Calu3 (cell line): ENCODE measurements at regions of chrX and their contacts with region 1.

Region 1: GRCh38 chrX:54891573-54891972 is 29.1 kb upstream of the TRO start:
- DNase-seq: peak; percentile 21
- H3K4me3 Mint-ChIP-seq: no peak overlapping the region
- H3K27ac Mint-ChIP-seq: no peak overlapping the region
- H3K4me1 Mint-ChIP-seq: no peaks in the 10 kb centered on the region
- H3K27me3 Mint-ChIP-seq: peaks cover 11% of the 10 kb centered on the region
- CTCF ChIP-seq: no peak

Region 2: DNA sequence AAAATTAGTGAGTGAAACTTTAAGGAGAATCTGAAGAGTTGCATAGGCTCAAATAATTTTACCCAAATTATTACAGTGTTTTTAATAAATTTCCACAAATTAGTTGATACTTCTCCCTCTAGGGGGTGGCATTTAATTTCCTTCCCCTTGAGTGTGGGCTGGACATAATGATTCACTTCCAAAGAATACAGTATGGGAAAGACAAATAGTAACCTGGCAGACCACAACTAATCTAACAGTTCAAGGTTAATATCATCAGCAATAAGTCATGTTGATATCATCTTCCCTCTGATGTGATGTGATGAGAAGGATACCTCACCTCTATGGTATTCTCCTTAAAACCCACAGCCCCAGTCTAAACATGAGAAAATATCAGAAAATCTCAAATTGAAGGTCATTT is 86.9 kb after region 1 on chrX:
- CTCF ChIA-PET with region 1: no interaction called
- intact Hi-C with region 1: no loop called
- DNase-seq: no peak
- H3K4me3 Mint-ChIP-seq: no peak overlapping the region
- H3K27ac Mint-ChIP-seq: no peak overlapping the region
- H3K4me1 Mint-ChIP-seq: no peaks in the 10 kb centered on the region
- H3K27me3 Mint-ChIP-seq: no peaks in the 10 kb centered on the region
- CTCF ChIP-seq: no peak

Region 3: DNA sequence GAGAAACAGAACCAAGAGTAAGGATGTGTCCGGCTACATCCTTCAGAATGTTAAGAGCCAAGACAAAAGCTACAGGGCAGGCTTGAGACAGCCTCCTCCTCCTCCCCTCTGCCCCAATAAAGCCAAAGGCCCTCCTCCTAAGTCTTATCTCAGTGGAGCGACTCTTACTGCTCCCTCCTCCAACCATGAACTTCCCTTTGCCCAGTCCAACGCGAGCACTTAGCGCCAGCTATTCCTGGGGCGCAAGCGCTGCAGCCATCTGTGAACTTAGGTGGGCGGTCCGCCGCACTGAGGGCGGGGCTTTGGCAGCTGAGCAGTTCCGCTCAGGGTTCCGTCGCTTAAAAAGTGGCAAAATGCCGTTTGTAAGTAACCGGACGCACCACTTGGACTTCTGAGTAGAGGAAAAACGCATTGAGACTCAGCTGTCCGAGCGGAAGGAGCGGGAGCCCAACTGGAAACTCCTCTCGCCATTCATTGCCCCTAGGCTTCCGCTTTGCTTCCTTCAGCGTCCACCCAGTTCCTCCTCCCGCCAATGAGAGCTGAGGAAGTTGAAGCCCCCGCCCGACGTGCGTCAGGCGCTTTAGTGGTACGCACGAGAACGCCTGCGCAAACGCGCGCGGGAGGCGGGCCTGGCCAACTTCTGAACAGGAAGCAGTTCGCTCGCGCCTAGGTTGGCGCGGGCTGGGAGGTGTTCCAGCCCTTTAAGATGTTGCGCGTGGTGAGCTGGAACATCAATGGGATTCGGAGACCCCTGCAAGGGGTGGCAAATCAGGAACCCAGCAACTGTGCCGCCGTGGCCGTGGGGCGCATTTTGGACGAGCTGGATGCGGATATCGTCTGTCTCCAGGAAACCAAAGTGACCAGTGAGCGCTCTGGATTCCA is 108.4 kb after region 1 on chrX and contains the start of gene APEX2:
- CTCF ChIA-PET with region 1: no interaction called
- intact Hi-C with region 1: loop called (anchors 10 kb)
- DNase-seq: peak; percentile 89
- H3K4me3 Mint-ChIP-seq: peak within 1 kb of the TSS; percentile 80
- H3K27ac Mint-ChIP-seq: peak within 1 kb of the TSS; percentile 89
- H3K4me1 Mint-ChIP-seq: peaks cover 12% of the 10 kb centered on the region
- H3K27me3 Mint-ChIP-seq: no peaks in the 10 kb centered on the region
- CTCF ChIP-seq: no peak
- total RNA-seq, gene APEX2: 28.7 and 32.4 TPM in 2 replicates